Left cardiac atrium (tissue), 4 donors: ENCODE measurements at regions of chr16 and their contacts with region 1.

Region 1: GRCh38 chr16:30464078-30464477 is 8.5 kb upstream of the ITGAL start:
- DNase-seq: no peak
- ATAC-seq: no peak

Region 2: GRCh38 chr16:30131869-30132475 is 332.1 kb before region 1 on chr16:
- intact Hi-C with region 1: no loop called
- DNase-seq: no peak
- ATAC-seq: no peak

Region 3: GRCh38 chr16:30368122-30368791 is 95.8 kb before region 1 on chr16:
- intact Hi-C with region 1: no loop called
- DNase-seq: peak; percentile 55
- ATAC-seq: no peak

Region 4: GRCh38 chr16:30519120-30520049 is 55.3 kb after region 1 on chr16:
- intact Hi-C with region 1: loop called in 1 of 2 experiments (anchors 10 kb)
- DNase-seq: no peak
- ATAC-seq: no peak